RWPE1 (cell line): ENCODE measurements at regions of chr14 and their contacts with region 1.

Region 1: DNA sequence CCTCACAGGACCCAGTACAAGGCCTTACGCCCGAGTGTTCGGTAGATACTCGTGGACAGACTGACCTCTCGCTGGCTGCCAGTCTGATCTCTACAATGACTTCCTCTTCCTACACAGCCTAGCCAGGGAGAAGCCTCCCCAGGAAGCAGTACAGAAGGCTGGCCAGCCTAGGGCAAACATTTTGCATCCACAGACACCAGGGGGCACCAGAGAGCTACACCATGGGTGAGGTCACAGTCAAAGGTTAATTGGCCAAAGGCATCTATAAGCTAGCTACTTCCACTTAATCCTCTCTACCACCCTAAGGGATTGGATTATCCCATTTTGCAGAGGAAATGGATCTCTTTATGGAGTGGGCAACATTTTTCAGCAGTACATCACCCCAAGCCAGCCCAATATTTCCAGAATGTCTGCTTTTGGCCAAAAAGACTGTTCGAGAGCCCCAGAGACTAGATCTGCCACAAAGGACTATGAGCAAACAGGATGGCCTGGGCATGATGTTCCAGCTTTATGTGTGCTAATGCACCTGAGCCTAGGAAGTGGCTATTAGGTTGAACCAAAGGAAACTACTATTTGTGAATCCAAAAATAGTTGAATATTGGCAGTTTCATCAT is 14.6 kb upstream of the PNMA1 start:
- DNase-seq: peak; percentile 76
- H3K27ac ChIP-seq: peak overlapping the region; percentile 93
- CTCF ChIP-seq: peak; percentile 87

Region 2: GRCh38 chr14:73662487-73662943 is 66.3 kb before region 1 on chr14:
- CTCF ChIA-PET with region 1: no interaction called
- POLR2A ChIA-PET with region 1: no interaction called
- DNase-seq: peak; percentile 71
- H3K27ac ChIP-seq: no peak overlapping the region
- CTCF ChIP-seq: peak; percentile 71

Region 3: DNA sequence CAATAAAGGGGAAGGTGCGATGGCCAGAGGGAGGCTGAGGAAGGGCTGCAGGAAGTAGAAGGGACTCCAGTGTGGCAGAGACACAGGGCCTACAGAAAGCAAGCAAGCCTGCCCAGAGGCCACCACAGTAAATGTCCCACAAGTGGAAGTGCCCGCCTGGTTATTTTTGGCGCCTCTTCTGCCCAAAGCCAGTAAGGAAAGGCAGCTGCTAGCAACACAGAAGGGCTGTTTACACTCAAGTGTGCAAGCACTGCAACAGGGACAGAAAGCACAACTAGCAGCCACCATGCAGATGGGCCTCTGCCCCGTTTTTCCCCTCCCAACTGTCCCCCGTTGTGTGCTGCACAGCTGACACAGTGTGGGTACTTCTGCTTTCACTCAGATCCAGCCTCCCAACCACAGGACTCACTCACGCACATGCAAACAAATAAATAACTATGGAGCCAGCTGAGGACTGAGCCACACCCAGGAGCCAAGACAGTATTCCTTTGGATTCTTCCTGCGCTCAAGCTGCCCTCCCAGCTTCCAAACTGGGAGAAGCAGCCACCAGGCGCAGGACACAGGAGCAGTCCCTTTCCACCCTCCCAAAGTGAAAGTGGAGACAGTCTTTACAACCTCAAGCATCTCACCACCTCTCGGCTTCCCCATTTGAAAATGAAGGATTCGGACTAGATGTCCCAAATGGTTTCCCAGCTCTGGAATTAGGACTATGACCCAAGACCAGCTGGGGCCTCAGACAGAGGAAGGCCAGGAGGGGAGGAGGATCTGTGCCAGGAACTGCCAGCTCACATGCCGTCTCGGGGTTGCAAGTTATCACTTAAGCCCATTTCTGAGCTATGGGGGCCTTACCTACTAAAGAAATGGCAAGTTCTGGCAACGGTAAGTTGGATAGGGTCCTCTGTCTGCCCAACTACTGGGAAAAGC is 25.4 kb after region 1 on chr14:
- CTCF ChIA-PET with region 1: interaction called, 29 read pairs
- POLR2A ChIA-PET with region 1: interaction called, 4 read pairs
- DNase-seq: no peak
- H3K27ac ChIP-seq: peak overlapping the region; percentile 98
- CTCF ChIP-seq: no peak

Region 4: DNA sequence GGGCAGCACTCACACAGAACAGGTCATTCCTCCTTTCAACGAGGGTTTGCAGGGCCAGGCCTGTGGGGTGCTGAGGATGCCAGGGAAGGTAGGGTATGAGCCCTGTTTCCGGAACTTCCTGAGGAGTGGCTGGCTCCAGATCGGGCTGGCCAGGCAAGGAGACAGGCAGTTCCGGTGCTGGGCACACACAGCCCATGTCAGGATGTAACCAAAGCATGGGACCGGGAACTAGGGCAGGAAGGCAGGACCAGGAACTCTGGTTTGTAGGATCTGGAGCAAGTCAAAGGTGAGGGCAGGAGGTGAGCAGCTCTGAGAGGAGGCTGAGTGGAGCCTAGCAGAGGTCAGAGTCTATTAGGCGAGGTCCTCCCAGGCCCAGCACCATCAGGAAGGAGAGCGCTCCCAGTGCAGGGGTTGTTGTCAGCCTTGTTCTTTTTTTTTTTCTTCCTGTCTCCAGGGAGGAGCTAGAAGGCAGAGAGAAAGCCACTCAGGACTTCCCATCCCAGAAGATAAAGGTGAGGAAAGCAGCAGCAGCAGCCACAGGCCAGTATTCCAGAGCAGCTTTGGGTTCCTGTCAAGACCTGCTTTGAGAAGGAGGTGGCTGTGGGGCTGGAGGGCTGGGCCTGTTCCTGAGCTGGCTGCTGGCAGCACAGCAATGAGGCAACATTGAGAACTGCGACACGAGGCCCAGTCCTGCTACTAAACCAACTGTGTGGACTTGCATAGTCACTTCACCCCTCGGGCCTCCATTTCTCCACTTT is 73.8 kb after region 1 on chr14:
- CTCF ChIA-PET with region 1: interaction called, 10 read pairs
- POLR2A ChIA-PET with region 1: interaction called, 3 read pairs
- DNase-seq: peak; percentile 42
- H3K27ac ChIP-seq: peak overlapping the region; percentile 97
- CTCF ChIP-seq: no peak

Region 5: DNA sequence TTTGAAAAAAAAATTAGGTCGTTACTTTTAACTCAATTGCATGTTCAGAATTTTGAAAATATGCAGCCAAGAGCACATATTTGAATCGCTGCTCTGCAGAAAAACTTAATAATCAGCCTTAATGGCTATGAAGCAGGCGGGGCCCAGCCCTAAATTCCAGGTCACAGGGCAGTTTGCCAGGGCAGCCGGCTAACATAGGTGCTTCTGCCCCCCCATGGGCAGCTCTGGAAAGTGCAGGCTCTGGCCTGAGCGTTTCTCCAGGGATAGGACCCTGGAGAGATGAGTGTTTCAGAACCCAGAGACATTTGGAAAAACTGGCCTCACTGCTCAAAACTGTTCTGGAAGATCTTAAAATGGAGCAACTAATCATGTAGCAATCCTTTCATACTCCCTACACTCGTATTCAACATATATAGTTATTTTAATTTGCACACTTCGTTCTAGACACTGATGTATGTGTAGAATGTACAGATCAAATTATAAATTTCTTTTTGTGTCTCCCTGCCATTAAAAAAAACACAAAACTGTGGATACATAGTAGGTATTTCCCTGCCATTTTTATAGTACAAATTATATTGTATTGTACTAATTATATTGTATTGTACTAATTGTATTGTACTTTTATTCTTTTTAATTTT is 96.8 kb after region 1 on chr14:
- CTCF ChIA-PET with region 1: interaction called, 17 read pairs
- POLR2A ChIA-PET with region 1: no interaction called
- DNase-seq: peak; percentile 90
- H3K27ac ChIP-seq: peak overlapping the region; percentile 52
- CTCF ChIP-seq: peak; percentile 96